Head of caudate nucleus (tissue), 42 donors: ENCODE measurements at regions of chr19 and their contacts with region 1.

Region 1: DNA sequence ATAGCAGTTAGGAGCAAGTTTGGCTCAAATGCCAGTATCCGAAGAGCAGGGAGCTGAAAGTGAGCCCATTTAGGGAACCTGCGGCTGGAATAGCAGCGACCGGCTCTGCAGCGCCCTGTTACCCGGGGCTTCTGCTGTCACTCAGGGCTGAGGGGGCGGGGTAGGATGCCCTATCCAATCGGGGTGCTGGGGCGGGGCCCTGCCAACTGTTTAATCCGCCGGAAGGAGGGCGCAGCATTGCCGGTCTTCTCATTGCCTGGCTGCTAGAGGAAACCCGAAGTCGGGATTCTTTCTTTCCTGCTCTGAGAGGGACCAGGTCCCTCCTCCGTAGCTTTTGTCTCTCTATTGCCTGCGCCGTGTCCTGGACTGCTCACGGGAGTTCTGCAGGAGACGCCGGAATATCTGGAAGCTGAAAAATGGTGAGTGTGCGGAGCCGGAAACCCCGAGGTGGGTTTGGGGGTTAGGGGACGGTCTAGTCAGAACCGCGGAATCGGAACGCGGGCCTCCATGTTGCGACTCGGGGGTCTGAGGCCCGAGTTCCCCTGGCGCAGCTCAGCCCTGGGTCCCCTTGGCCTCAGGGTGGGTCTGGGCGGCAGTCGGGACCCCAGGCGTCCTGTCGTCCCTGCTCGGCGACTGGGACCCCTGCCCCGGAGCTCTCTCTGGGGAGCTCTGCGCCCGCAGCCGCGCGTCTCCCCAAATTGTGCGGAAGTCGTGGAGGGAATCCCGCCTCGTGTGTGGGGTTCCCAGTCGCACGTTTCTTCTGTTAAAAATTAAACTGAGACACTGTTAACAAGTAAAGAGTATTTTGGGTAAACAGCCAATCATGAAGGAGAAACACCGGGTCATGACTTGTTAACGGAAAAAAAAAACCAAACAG is 22.8 kb downstream of the ZNF763 start:
- DNase-seq: peak; percentile 90 to 99 (median 97)

Region 2: DNA sequence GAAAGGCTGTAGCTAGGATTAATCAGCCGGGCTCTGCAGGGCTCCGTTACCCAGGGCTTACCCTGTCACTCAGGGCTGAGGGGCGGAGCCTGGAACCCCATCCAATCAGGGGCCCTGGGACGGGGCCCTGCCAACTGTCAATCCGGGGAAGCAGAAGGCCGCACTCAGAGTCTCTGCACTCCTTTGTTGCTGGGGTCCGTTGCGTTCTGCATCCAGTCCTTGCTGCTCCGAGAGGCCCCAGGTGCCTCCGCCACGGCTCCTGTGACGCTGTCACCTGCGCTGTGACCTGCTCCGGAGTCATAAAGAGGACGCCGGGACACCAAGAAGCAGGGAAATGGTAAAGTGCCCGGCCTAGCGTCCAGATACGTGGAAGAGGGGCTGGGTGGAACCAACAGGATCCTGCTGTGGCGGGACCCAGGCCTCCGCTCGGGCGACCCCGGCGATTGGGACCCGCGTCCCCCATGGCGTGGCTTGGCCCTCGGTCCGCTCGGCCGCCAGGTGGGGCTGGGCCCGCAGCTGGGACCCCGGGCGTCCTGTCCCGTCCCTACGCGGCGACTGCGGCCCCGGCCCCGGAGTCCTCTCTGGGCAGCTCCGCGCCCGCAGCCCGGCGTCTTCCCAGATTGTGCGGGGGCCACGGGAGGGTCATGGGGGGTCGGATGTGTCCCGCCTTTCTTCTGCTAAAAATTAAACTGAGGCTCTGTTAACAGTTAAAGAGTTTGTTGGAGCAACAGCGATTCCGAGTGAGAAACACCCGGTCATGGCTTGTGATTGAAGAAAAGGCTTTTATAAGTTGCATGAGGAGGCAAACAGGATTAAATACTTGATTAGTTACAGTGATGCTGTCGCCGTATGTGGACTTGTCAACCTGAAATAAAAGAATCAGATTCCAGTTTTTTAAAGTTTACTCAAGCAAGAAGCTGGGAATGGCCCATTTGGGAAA is 189.0 kb before region 1 on chr19 and contains the start of gene ZNF491:
- intact Hi-C with region 1: loop called (anchors 5 kb)
- DNase-seq: peak; percentile 93 to 99 (median 97)

Region 3: GRCh38 chr19:11924886-11925650 is 62.6 kb before region 1 on chr19 and contains the start of gene ZNF700:
- intact Hi-C with region 1: loop called (anchors 5 kb)
- DNase-seq: peak; percentile 90 to 99 (median 96)